Activated T-helper 1 cell treated with anti-CD3 and anti-CD28 coated beads, Interleukin-12 subunit alpha, Interleukin-12 subunit beta, Interleukin-2, Interleukin-4 antibody, amounts not matched to agents 30 ng/mL and 10 ng/mL and 1 ng/mL, durations not matched to agents 14 hours and 24 hours and 36 hours (primary cell): ENCODE measurements at regions of chr20 and their contacts with region 1.

Region 1: DNA sequence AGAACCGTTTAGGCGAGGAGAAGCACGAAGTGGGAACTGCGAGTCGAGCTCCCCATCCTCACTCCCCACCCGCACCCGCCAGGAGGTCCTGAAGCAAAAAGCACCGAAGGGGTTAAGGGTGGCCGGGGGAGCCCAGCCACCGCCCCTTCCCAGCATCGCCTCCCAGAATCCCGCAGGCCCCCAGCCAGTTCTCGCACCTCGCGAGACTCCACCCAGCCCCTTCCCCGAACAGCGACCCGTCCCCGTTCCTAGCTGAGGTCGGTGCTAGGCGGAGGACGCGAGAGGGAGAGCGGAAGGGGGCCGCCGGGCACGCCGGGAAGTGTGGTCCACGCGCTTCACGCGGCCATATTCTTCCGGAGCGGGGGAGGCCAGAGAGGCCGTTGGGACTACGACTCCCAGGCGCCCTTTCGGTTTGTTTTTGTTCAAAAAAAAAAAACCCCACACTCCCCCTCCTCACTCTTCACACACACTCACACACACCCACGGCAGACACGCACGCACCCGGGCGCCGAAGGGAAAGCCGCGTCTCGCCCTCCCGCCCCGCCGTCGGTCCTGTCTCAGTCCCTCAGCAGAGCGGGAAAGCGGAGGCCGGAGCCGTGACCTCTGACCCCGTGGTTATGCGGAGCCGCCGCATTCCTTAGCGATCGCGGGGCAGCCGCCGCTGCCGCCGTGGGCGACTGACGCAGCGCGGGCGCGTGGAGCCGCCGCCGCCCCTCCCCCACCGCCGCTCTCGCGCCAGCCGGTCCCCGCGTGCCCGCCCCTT is at the start of gene ASXL1:
- DNase-seq: peak; percentile 96
- H3K4me3 Mint-ChIP-seq: peak within 1 kb of the TSS; percentile 98
- H3K27ac Mint-ChIP-seq: peak within 1 kb of the TSS; percentile 100
- H3K4me1 Mint-ChIP-seq: peaks cover 67% of the 10 kb centered on the region
- H3K27me3 Mint-ChIP-seq: no peaks in the 10 kb centered on the region
- total RNA-seq, gene ASXL1: 136 and 142 TPM in 2 replicates

Region 2: DNA sequence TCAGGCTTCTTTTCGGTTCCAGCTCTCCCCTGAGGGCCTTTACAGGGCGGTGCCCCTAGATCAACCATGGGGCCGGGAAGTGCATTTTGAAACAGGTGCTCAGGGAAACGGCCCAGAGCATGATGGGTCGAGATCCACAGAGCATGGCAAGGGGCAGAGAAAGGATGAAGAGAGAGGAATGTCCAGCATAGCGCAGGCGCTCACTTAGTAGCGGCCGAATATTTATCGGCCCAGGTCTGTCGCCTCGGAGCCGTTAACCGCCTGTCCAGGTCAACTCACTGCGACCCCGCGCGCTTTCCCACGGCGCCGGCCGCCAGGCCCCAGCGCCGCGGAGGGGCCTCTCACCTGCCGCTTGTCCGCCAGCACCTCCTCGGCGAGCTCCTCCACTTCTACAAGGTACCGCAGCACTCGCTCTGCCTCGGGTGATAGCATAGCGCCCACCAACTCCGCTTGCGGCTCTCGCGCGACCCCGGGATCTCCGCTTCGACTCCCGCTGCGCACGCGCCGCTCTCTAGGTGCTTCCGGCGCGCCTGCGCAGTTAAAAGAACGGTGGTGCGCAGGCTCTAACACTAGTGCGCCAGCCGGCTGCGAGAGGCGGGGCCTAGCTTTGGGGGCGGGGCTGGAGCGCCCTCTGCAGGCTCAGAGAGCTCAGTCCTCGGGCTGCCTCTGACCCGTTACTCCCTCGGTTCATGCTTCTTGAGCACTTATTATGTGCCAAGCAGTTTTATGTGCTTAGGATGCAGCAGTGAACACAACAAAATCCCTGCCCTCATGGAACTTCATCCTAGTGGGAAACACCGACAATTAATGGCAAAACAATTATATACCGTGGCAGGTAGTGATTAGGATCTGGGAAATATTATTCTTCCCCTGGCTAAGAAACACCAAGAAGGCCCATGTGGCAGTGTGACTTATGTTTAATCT is 406.3 kb before region 1 on chr20 and contains the start of gene PDRG1:
- intact Hi-C with region 1: loop called (anchors 5 kb)
- DNase-seq: peak; percentile 96
- H3K4me3 Mint-ChIP-seq: peak within 1 kb of the TSS; percentile 97
- H3K27ac Mint-ChIP-seq: peak within 1 kb of the TSS; percentile 95
- H3K4me1 Mint-ChIP-seq: peaks cover 28% of the 10 kb centered on the region
- H3K27me3 Mint-ChIP-seq: peaks cover 8% of the 10 kb centered on the region
- total RNA-seq, gene PDRG1: 20.0 and 20.5 TPM in 2 replicates

Region 3: GRCh38 chr20:32231847-32232246 is 126.2 kb before region 1 on chr20:
- intact Hi-C with region 1: loop called (anchors 1 kb)
- DNase-seq: peak; percentile 31
- H3K4me3 Mint-ChIP-seq: peak overlapping the region; percentile 69
- H3K27ac Mint-ChIP-seq: peak overlapping the region; percentile 95
- H3K4me1 Mint-ChIP-seq: peaks cover 40% of the 10 kb centered on the region
- H3K27me3 Mint-ChIP-seq: no peaks in the 10 kb centered on the region

Region 4: DNA sequence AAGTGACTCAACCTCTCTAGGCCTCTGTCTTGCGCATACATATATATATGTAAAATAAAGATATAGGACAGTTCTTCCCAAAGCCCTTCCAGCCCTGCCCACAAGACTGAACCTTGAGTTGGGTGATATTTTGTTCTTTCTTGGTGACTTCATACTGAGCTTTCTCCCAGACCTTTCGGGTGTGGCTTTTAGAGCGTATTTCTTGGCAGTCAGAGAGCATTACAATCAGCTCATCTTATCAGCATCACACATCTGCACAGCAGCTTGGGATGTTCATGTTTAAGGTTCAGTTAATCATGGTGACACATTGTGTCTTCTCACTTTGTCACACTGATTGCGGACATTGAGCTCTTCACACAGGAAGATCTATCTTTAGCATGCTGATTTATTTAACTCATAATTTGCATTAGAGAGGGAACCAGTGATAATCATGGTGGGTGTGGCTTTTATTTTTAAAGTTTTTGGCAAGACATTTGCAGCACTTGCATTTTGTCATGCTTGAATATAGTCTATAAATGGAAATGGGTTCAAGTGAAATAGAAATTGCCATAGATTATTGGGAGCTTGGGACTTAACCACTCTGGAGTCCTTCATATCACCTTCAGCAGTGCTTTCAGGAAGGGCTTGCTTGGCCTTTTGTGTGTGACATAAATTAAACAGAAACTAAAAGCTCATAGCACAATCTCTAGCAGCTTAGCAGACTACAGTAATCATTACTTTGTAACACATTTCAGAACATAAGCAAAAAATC is 72.3 kb before region 1 on chr20:
- intact Hi-C with region 1: loop called (anchors 1 kb)
- DNase-seq: peak; percentile 41
- H3K4me3 Mint-ChIP-seq: peak overlapping the region; percentile 23
- H3K27ac Mint-ChIP-seq: peak overlapping the region; percentile 87
- H3K4me1 Mint-ChIP-seq: peaks cover 75% of the 10 kb centered on the region
- H3K27me3 Mint-ChIP-seq: no peaks in the 10 kb centered on the region

Region 5: GRCh38 chr20:32368925-32369324 is 10.9 kb after region 1 on chr20:
- intact Hi-C with region 1: loop called (anchors 1 kb)
- DNase-seq: no peak
- H3K4me3 Mint-ChIP-seq: peak overlapping the region; percentile 3
- H3K27ac Mint-ChIP-seq: peak overlapping the region; percentile 29
- H3K4me1 Mint-ChIP-seq: peaks cover 48% of the 10 kb centered on the region
- H3K27me3 Mint-ChIP-seq: no peaks in the 10 kb centered on the region

Region 6: DNA sequence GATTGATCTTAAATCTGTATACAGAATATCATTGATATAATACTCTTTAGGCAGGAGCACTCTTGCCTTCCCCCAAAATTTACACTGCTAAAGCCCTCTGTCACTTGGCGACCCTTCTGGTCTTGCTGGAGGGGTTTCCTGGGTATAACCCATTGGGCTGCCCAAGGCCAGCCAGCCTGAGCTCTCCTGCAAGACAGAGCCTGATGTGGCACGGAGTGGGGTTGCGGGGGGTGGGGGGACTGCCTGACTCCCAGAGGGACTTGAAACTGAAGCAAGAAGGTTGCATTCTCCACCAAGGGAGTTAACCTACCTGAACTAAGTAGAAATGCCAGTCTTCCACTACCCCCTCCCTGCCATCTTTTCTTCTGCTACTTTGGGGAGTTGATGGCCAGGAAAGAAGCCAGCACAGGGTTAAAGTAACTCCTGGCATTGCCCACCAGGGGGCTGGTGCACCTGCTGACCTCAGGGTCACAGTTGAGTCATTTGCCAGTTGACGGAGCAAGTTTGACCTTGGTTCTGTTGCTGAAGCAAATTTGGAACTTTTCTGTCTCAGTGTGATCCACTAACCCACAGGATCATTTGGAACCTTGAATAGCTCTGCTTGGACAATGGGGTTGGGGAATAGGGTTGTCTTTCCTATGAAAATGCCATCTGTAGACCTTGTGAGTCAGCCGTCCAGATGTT is 79.5 kb after region 1 on chr20:
- intact Hi-C with region 1: loop called (anchors 2 kb)
- DNase-seq: no peak
- H3K4me3 Mint-ChIP-seq: no peak overlapping the region
- H3K27ac Mint-ChIP-seq: no peak overlapping the region
- H3K4me1 Mint-ChIP-seq: peaks cover 14% of the 10 kb centered on the region
- H3K27me3 Mint-ChIP-seq: no peaks in the 10 kb centered on the region

Region 7: GRCh38 chr20:32456869-32457478 is 98.9 kb after region 1 on chr20:
- intact Hi-C with region 1: no loop called
- DNase-seq: no peak
- H3K4me3 Mint-ChIP-seq: no peak overlapping the region
- H3K27ac Mint-ChIP-seq: no peak overlapping the region
- H3K4me1 Mint-ChIP-seq: no peaks in the 10 kb centered on the region
- H3K27me3 Mint-ChIP-seq: no peaks in the 10 kb centered on the region

Region 8: DNA sequence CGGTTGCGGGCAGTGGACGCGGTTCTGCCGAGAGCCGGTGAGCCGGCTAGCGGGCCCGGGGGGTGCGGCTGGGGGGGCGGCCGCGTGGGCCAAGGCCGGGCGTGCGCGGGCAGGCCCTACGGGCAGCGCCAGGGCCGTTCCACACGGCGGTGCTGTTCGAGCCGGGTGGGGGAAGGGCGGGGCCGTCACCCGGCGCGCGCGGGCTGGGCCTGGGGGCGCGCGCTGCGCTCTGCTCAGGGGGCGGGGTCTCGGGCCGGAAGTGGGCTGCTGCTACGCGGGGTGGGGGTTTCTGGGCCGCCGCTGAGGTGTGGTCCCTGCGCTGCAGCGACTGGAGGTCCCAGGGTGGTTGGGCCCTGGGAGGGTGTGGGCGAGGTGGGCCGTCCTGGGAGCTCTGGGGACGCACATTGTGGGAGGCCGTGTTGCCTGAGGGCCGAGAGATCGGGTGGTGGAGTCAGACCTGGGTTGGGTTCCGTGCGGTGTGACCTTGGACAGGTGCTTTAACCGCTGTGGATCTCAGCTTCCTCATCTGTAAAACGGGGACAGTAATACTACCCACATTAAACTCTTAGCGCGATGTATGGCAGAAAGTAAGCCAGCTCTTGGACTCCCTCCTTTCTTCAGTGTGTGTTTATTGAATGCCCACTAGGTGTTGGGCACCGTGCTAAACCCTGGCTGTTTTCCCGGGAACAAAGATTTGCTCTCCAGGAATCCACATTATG is 462.1 kb after region 1 on chr20:
- intact Hi-C with region 1: loop called (anchors 5 kb)
- DNase-seq: no peak
- H3K4me3 Mint-ChIP-seq: peak overlapping the region; percentile 96
- H3K27ac Mint-ChIP-seq: peak overlapping the region; percentile 94
- H3K4me1 Mint-ChIP-seq: peaks cover 39% of the 10 kb centered on the region
- H3K27me3 Mint-ChIP-seq: no peaks in the 10 kb centered on the region